Activated CD4-positive, alpha-beta T cell treated with anti-CD3 and anti-CD28 coated beads for 36 hours (primary cell): ENCODE measurements at regions of chr4 and their contacts with region 1.

Region 1: DNA sequence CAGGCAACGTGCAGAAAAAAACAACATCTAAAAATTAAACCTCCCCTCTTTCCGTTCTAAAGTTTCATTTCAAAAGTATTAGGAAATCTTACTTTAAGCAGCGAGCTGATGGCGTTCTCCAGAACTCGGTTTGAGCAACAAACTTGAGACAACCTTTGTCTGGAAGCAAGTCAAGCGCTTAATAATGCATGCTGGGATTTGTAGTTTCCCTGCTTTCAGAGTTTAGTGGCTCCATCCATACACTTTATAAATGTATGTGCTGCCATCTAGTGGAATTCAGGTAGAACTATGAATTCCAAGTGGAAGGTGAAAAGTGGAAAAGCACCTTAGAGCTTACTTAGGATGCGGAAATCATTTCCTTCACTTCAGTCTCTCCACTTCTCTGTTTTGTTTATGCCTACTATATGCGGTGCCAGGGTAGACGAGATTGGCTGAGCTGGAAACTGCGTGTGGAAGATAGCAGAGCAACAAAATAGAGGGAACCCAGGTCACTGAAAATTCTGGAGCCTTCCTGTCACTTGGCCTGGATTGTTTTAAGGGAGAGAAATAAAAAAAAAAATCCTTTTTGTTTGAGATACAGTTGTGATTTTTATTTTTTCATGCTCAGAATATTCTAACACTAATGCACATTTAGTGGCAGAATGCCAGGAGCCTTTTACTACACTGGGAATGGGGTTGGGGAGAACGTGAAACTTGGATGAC is at the start of gene BDH2:
- DNase-seq: peak; percentile 55
- ATAC-seq: peak; percentile 98
- H3K4me3 Mint-ChIP-seq: peak within 1 kb of the TSS; percentile 74
- H3K27ac Mint-ChIP-seq: peak within 1 kb of the TSS; percentile 85
- H3K4me1 Mint-ChIP-seq: peaks cover 18% of the 10 kb centered on the region
- H3K27me3 Mint-ChIP-seq: no peaks in the 10 kb centered on the region
- total RNA-seq, gene BDH2: 12.7 to 14.8 TPM

Region 2: GRCh38 chr4:102449751-102450352 is 650.0 kb before region 1 on chr4:
- CTCF ChIA-PET with region 1: no interaction called
- POLR2A ChIA-PET with region 1: no interaction called
- intact Hi-C with region 1: loop called in 1 of 2 experiments (anchors 2 kb)
- DNase-seq: peak; percentile 69
- ATAC-seq: peak; percentile 86
- H3K4me3 Mint-ChIP-seq: no peak overlapping the region
- H3K27ac Mint-ChIP-seq: no peak overlapping the region
- H3K4me1 Mint-ChIP-seq: peaks cover 54% of the 10 kb centered on the region
- H3K27me3 Mint-ChIP-seq: no peaks in the 10 kb centered on the region

Region 3: GRCh38 chr4:102627831-102628523 is 471.9 kb before region 1 on chr4:
- CTCF ChIA-PET with region 1: no interaction called
- POLR2A ChIA-PET with region 1: no interaction called
- intact Hi-C with region 1: loop called in 1 of 2 experiments (anchors 2 kb)
- DNase-seq: peak; percentile 48
- ATAC-seq: peak; percentile 85
- H3K4me3 Mint-ChIP-seq: peak overlapping the region; percentile 50
- H3K27ac Mint-ChIP-seq: peak overlapping the region; percentile 86
- H3K4me1 Mint-ChIP-seq: peaks cover 69% of the 10 kb centered on the region
- H3K27me3 Mint-ChIP-seq: no peaks in the 10 kb centered on the region

Region 4: GRCh38 chr4:103019308-103020124 is 80.3 kb before region 1 on chr4 and contains the start of gene SLC9B1:
- CTCF ChIA-PET with region 1: interaction called, 7 read pairs
- POLR2A ChIA-PET with region 1: no interaction called
- intact Hi-C with region 1: loop called (anchors 1 kb)
- DNase-seq: peak; percentile 97
- ATAC-seq: peak; percentile 98
- H3K4me3 Mint-ChIP-seq: peak within 1 kb of the TSS; percentile 86
- H3K27ac Mint-ChIP-seq: peak within 1 kb of the TSS; percentile 97
- H3K4me1 Mint-ChIP-seq: peaks cover 19% of the 10 kb centered on the region
- H3K27me3 Mint-ChIP-seq: no peaks in the 10 kb centered on the region
- total RNA-seq, gene SLC9B1: 1.8 to 3.7 TPM

Region 5: GRCh38 chr4:103046416-103047290 is 53.2 kb before region 1 on chr4:
- CTCF ChIA-PET with region 1: interaction called, 66 read pairs
- POLR2A ChIA-PET with region 1: no interaction called
- intact Hi-C with region 1: loop called (anchors 2 kb)
- DNase-seq: peak; percentile 49
- ATAC-seq: peak; percentile 96
- H3K4me3 Mint-ChIP-seq: no peak overlapping the region
- H3K27ac Mint-ChIP-seq: no peak overlapping the region
- H3K4me1 Mint-ChIP-seq: peaks cover 10% of the 10 kb centered on the region
- H3K27me3 Mint-ChIP-seq: no peaks in the 10 kb centered on the region

Region 6: DNA sequence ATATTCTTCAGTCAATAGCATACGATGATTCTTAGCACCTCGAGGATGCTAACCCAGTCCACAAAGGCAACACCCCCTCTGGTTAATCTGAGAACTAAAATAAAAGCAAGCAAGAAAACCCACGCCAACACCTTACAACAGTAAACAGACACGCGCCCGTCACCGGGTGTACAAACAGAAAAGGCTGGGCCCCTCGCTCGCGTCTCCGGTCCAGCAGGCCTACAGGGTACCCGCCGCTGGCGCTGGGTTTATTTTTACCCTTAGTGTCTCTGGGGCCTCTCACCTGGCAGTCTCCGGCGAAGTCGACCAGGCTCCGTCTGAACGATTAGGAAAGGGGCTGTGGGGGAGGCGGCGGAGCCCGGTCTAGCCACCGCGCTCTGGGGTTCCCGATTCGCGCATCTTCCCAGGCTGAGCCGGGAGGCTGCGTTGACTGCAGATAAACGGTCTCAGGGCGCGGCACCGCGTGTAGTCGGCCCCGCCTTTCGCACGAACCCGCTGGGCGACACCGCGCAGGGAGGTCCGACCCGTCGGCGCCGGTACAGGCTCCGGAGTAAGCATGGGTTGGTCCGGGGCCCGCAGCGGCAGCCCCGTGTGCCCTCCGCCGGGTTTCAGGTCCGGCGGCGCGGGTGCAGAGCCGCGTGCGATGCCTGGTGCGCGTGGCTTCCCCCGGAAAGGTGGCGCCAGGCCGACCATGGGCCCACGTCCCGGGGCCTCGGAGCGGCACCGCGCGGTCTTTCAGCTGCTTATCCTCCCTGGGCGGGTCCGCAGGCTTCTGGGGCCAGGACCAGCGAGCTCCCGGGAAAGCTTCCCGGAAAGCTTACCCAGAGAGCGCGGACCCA is 23.7 kb before region 1 on chr4:
- CTCF ChIA-PET with region 1: interaction called, 23 read pairs
- POLR2A ChIA-PET with region 1: no interaction called
- intact Hi-C with region 1: loop called (anchors 1 to 2 kb)
- DNase-seq: peak; percentile 79
- ATAC-seq: peak; percentile 63
- H3K4me3 Mint-ChIP-seq: peak overlapping the region; percentile 84
- H3K27ac Mint-ChIP-seq: peak overlapping the region; percentile 99
- H3K4me1 Mint-ChIP-seq: peaks cover 45% of the 10 kb centered on the region
- H3K27me3 Mint-ChIP-seq: no peaks in the 10 kb centered on the region

Region 7: GRCh38 chr4:103934178-103934789 is 834.4 kb after region 1 on chr4:
- CTCF ChIA-PET with region 1: no interaction called
- POLR2A ChIA-PET with region 1: no interaction called
- intact Hi-C with region 1: loop called in 1 of 2 experiments (anchors 10 kb)
- DNase-seq: peak; percentile 14
- ATAC-seq: no peak
- H3K4me3 Mint-ChIP-seq: no peak overlapping the region
- H3K27ac Mint-ChIP-seq: no peak overlapping the region
- H3K4me1 Mint-ChIP-seq: no peaks in the 10 kb centered on the region
- H3K27me3 Mint-ChIP-seq: no peaks in the 10 kb centered on the region